ENCODE measurements at regions of chr2 and their contacts with region 1.

Region 1: GRCh38 chr2:201680743-201681142 is 17.7 kb downstream of the MPP4 start:
- DNase-seq: peak; percentile 56 to 61
- H3K4me3 ChIP-seq: no peak overlapping the region
- H3K4me3 Mint-ChIP-seq: no peak overlapping the region
- H3K27ac Mint-ChIP-seq: no peak overlapping the region
- H3K4me1 ChIP-seq: no peaks in the 10 kb centered on the region
- H3K4me1 Mint-ChIP-seq: no peaks in the 10 kb centered on the region
- H3K27me3 ChIP-seq: no peaks in the 10 kb centered on the region
- H3K27me3 Mint-ChIP-seq: peaks cover 3% of the 10 kb centered on the region
- CTCF ChIP-seq: peak; percentile 54 to 66

Region 2: DNA sequence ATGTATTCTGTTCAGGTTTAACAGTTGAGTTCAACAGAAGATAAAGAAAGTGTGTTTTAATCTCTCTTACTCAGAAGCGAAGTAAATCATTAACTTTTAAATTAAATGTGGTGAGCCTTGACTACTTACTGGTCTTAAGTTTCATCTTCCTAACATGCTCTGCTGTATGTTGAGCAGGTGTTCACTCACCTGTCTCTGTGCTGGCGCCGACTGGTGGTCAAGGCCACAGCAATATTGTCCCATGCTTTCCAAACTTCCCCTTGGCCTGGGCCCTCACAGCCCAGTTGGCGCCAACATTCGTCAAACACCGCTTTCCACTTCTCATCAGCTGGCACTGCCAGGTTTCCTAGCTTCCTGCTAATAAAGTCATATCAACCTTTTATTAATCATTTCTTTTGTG is 34.7 kb after region 1 on chr2:
- CTCF ChIA-PET with region 1: no interaction called
- POLR2A ChIA-PET with region 1: no interaction called
- intact Hi-C with region 1: loop called (anchors 2 kb)
- DNase-seq: peak; percentile 64 to 66
- H3K4me3 ChIP-seq: no peak overlapping the region
- H3K4me3 Mint-ChIP-seq: no peak overlapping the region
- H3K27ac Mint-ChIP-seq: no peak overlapping the region
- H3K4me1 ChIP-seq: peaks cover 7% of the 10 kb centered on the region; the same call in 1 of the 2 replicates
- H3K4me1 Mint-ChIP-seq: peaks cover 8% of the 10 kb centered on the region
- H3K27me3 ChIP-seq: no peaks in the 10 kb centered on the region
- H3K27me3 Mint-ChIP-seq: no peaks in the 10 kb centered on the region
- CTCF ChIP-seq: peak; percentile 51 to 61

Region 3: GRCh38 chr2:201807452-201807999 is 126.8 kb after region 1 on chr2:
- CTCF ChIA-PET with region 1: no interaction called
- POLR2A ChIA-PET with region 1: no interaction called
- intact Hi-C with region 1: no loop called
- DNase-seq: no peak
- H3K4me3 ChIP-seq: no peak overlapping the region
- H3K4me3 Mint-ChIP-seq: no peak overlapping the region
- H3K27ac Mint-ChIP-seq: no peak overlapping the region
- H3K4me1 ChIP-seq: peaks cover 23% of the 10 kb centered on the region
- H3K4me1 Mint-ChIP-seq: peaks cover 35% of the 10 kb centered on the region
- H3K27me3 ChIP-seq: no peaks in the 10 kb centered on the region
- H3K27me3 Mint-ChIP-seq: no peaks in the 10 kb centered on the region
- CTCF ChIP-seq: no peak